ENCODE measurements at regions of chr15 and their contacts with region 1.

Region 1: GRCh38 chr15:91032919-91033803 is 10.8 kb upstream of the VPS33B start:
- DNase-seq: peak; percentile 74 to 88
- H3K4me3 ChIP-seq: no peak overlapping the region
- H3K27ac ChIP-seq: no peak overlapping the region
- H3K4me1 ChIP-seq: no peaks in the 10 kb centered on the region
- H3K27me3 ChIP-seq: peaks cover 21% of the 10 kb centered on the region; the same call in 1 of the 2 replicates
- CTCF ChIP-seq: peak; percentile 83

Region 2: GRCh38 chr15:90902040-90902839 is 130.9 kb before region 1 on chr15:
- CTCF ChIA-PET with region 1: no interaction called
- POLR2A ChIA-PET with region 1: no interaction called
- intact Hi-C with region 1: loop called (anchors 5 kb)
- DNase-seq: peak; percentile 60 to 75
- H3K4me3 ChIP-seq: peak overlapping the region; percentile 60
- H3K27ac ChIP-seq: peak overlapping the region; percentile 25; the same call in 1 of the 2 replicates
- H3K4me1 ChIP-seq: peaks cover 18% of the 10 kb centered on the region
- H3K27me3 ChIP-seq: no peaks in the 10 kb centered on the region
- CTCF ChIP-seq: peak; percentile 69

Region 3: GRCh38 chr15:91491101-91491950 is 458.2 kb after region 1 on chr15:
- CTCF ChIA-PET with region 1: no interaction called
- POLR2A ChIA-PET with region 1: interaction called, 15 read pairs
- intact Hi-C with region 1: no loop called
- DNase-seq: no peak
- H3K4me3 ChIP-seq: no peak overlapping the region
- H3K27ac ChIP-seq: no peak overlapping the region
- H3K4me1 ChIP-seq: no peaks in the 10 kb centered on the region
- H3K27me3 ChIP-seq: no peaks in the 10 kb centered on the region
- CTCF ChIP-seq: no peak